ENCODE measurements at regions of chr5 and their contacts with region 1.

Region 1: GRCh38 chr5:135296904-135297816 is 101.9 kb downstream of the MACROH2A1 start:
- DNase-seq: no peak

Region 2: GRCh38 chr5:135317286-135317685 is 20.1 kb after region 1 on chr5:
- intact Hi-C with region 1: loop called in 1 of 2 experiments (anchors 1 kb)
- DNase-seq: no peak

Measured in posterior vena cava (tissue), 2 donors.